Naive thymus-derived CD8-positive, alpha-beta T cell (primary cell): ENCODE measurements at regions of chr11 and their contacts with region 1.

Region 1: DNA sequence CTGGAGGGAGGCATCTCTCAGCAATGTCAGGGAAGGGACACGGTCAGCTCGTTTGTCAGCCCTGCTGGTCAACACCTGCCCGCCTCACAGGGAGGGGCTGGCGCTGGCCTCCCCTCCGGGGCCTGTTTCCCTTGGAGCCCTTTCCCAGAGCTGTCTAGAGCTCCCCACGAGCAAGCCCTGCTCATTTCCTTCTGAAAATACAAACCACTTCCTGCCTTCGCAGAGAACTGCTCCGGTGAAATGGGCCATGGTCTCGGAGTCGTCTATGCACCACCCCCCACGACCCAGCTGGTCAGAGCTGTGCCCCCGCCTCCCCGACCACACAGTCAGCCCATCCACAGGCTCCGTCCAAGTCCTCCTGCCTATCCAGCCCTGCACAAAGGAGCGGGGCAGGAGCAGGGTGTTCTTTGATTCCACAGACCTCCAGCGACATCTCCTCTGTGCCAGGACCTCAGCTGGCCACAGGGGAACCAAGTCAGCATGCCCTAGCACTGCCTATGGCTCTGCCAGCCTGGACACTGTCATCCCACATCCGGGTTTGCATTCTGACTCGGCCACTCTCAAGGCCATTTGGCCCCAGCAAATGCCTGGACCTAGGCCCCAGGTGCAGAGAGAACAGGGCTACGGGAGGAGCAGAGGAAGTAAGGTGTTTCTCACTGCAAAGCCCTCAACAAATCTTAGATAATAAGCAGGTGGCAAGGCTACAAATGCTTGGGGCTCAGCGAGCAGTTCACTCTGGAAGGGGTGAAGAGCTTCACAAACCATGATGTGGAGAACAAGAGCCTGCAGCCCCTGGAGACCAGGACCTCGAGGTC is 82.1 kb upstream of the WNT11 start:
- DNase-seq: peak in 5 of 10 donors; percentile 10 to 43 (median 26)
- ATAC-seq: peak; percentile 82 to 86
- H3K4me3 Mint-ChIP-seq: peak overlapping the region; percentile 36 to 82 (median 77)
- H3K27ac Mint-ChIP-seq: peak overlapping the region; percentile 84 to 95 (median 92)
- H3K4me1 Mint-ChIP-seq: peaks cover 31 to 58% (median 47%) of the 10 kb centered on the region in 4 donors
- H3K27me3 Mint-ChIP-seq: no peaks in the 10 kb centered on the region

Region 2: GRCh38 chr11:76225122-76225611 is 63.2 kb before region 1 on chr11:
- POLR2A ChIA-PET with region 1: no interaction called
- DNase-seq: no peak
- ATAC-seq: no peak
- H3K4me3 Mint-ChIP-seq: no peak overlapping the region
- H3K27ac Mint-ChIP-seq: peak overlapping the region in 1 of 10 donors; percentile 53
- H3K4me1 Mint-ChIP-seq: peaks cover 0 to 5% (median 1%) of the 10 kb centered on the region in 4 donors
- H3K27me3 Mint-ChIP-seq: peaks cover 0 to 15% (median 0%) of the 10 kb centered on the region in 5 donors

Region 3: GRCh38 chr11:76235233-76236091 is 52.9 kb before region 1 on chr11:
- POLR2A ChIA-PET with region 1: interaction called, 11 read pairs
- DNase-seq: peak; percentile 77 to 97 (median 91)
- ATAC-seq: peak; percentile 85 to 88
- H3K4me3 Mint-ChIP-seq: peak overlapping the region; percentile 89 to 98 (median 94)
- H3K27ac Mint-ChIP-seq: peak overlapping the region; percentile 91 to 100 (median 94)
- H3K4me1 Mint-ChIP-seq: peaks cover 30 to 59% (median 53%) of the 10 kb centered on the region in 4 donors
- H3K27me3 Mint-ChIP-seq: peaks cover 0 to 10% (median 0%) of the 10 kb centered on the region in 5 donors